ENCODE measurements at regions of chr1 and their contacts with region 1.

Region 1: GRCh38 chr1:145845514-145846161 is at the start of gene NUDT17:
- DNase-seq: peak; percentile 24
- H3K4me3 ChIP-seq: peak within 1 kb of the TSS; percentile 70
- H3K27ac ChIP-seq: peak within 1 kb of the TSS; percentile 31
- H3K27me3 ChIP-seq: no peaks in the 10 kb centered on the region
- CTCF ChIP-seq: peak; percentile 93
- polyA plus RNA-seq, gene NUDT17: 3.3 and 3.7 TPM in 2 replicates

Region 2: GRCh38 chr1:145858894-145859490 is 13.4 kb after region 1 on chr1 and contains the start of gene PIAS3:
- CTCF ChIA-PET with region 1: interaction called, 104 read pairs
- POLR2A ChIA-PET with region 1: interaction called, 116 read pairs
- DNase-seq: peak; percentile 88
- H3K4me3 ChIP-seq: peak within 1 kb of the TSS; percentile 95
- H3K27ac ChIP-seq: peak within 1 kb of the TSS; percentile 70
- H3K27me3 ChIP-seq: no peaks in the 10 kb centered on the region
- CTCF ChIP-seq: no peak
- polyA plus RNA-seq, gene PIAS3: 29.2 and 40.1 TPM in 2 replicates

Region 3: DNA sequence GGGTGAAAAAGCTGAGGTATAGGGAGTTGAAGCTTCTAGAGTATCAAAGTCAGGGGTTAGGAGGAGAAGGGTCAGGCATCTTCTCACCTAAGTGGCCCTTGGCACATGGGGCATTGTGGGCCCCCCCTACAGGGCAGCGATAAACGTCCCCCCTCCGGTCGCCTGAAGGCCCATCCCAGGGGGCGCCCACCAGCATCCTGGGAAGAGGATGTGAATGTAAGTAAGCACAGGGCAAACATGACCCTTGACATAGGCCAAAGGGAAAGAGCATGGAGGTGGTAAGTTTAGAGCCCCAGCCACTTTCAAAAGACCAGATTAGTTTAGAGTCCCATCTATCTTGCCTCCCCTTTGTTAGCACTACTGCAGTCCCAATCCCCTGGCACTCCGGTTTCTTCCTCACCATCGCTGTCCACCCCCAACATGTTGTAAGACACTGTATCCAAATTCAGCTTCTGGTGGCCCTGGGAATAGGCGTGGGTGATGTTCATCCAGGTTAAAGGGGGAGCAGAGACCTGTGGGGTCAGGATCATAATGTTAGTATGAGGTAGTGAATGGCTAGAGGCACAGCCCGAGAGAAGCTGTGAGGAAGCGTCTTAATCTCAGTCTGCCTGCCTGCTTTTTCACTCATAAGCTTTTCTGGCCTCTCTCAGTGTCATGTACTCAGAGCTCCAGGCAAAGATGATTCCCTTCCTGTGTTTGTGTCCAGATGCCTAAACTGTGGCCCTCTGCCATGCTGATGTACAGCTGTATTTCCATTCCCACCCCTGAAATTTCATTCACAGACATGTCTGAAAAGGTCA is 61.5 kb after region 1 on chr1:
- CTCF ChIA-PET with region 1: interaction called, 50 read pairs
- POLR2A ChIA-PET with region 1: interaction called, 3 read pairs
- DNase-seq: no peak
- H3K4me3 ChIP-seq: no peak overlapping the region
- H3K27ac ChIP-seq: no peak overlapping the region
- H3K27me3 ChIP-seq: no peaks in the 10 kb centered on the region
- CTCF ChIP-seq: no peak

Region 4: GRCh38 chr1:146012737-146013403 is 167.2 kb after region 1 on chr1:
- CTCF ChIA-PET with region 1: interaction called, 70 read pairs
- POLR2A ChIA-PET with region 1: interaction called, 3 read pairs
- DNase-seq: peak; percentile 57
- H3K4me3 ChIP-seq: no peak overlapping the region
- H3K27ac ChIP-seq: no peak overlapping the region
- H3K27me3 ChIP-seq: no peaks in the 10 kb centered on the region
- CTCF ChIP-seq: peak; percentile 75

Region 5: GRCh38 chr1:146036965-146037646 is 191.5 kb after region 1 on chr1:
- CTCF ChIA-PET with region 1: interaction called, 12 read pairs
- POLR2A ChIA-PET with region 1: no interaction called
- DNase-seq: peak; percentile 78
- H3K4me3 ChIP-seq: peak overlapping the region; percentile 85
- H3K27ac ChIP-seq: peak overlapping the region; percentile 83
- H3K27me3 ChIP-seq: no peaks in the 10 kb centered on the region
- CTCF ChIP-seq: no peak

Measured in AG04450 (cell line).